ENCODE measurements at regions of chr5 and their contacts with region 1.

Region 1: DNA sequence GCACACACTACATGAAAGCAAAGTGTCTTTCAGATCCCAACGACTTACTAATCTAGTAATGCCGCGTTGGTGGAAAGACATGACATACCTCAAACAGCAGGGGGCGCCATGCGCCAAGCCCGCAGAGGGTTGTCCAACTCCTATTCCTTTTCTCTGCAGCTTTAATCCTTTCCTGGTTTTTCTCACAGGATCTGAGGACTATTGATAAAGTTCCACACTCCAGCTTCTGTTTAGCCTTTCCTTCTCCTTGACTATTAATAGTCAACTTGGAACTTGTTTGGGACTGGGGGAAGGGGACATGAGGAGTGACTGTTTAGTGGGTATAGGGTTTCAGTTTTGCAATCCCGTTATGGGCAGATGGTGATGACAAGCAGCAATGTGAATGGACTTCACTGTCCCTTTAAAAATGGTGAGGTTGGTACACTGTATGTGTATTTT is 62.9 kb downstream of the OTULIN start:
- DNase-seq: peak; percentile 91
- ATAC-seq: peak; percentile 89

Region 2: GRCh38 chr5:15003511-15003920 is 276.1 kb after region 1 on chr5:
- intact Hi-C with region 1: loop called (anchors 5 kb)
- DNase-seq: peak; percentile 59
- ATAC-seq: peak; percentile 93